ENCODE measurements at regions of chr17 and their contacts with region 1.

Region 1: GRCh38 chr17:35119368-35120165 is at the start of gene RAD51D:
- DNase-seq: peak; percentile 23 to 46
- ATAC-seq: peak; percentile 91 to 96
- H3K4me3 ChIP-seq: peak within 1 kb of the TSS; percentile 70 to 98 (median 75)
- H3K27ac ChIP-seq: peak within 1 kb of the TSS; percentile 64 to 79 (median 73)
- H3K4me1 ChIP-seq: peaks cover 6 to 7% of the 10 kb centered on the region in 2 donors
- H3K27me3 ChIP-seq: no peaks in the 10 kb centered on the region
- CTCF ChIP-seq: peak; percentile 85 to 99 (median 96)
- POLR2A ChIP-seq: no peak
- total RNA-seq, gene RAD51D: 2.5 to 5.2 (median 2.8) TPM

Region 2: DNA sequence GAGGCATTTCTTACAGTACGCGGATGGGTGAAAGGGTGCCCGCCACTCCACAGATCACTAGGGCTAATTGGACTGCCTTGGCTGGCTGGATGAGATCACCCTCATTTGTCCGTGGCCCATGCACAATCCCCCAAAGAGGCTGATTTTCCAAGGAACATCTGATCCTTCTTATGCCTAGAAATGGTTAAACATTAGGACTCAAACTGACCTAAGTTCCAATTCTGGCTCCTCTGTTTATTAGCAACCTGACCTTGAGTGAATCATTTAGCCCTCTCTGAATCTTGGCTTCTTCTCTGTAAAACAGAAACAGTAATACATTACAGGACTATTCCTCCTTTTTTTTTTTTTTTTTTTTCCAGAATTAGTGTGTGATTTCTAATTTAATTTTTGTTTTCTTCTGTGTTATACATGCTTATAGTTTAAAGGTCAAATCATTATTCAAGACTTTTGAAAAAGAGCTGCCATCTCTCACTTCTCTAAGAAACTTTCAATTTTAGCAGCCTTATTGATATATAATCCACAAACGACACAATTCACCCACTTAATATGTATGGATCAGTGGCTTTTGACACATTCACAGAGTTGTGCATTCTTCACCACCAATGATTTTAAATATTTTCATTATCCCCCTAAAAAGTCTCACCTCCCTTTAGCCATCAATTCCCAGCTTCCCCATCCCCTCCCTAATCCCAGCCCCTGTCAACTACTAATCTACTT is 585.6 kb before region 1 on chr17:
- in situ Hi-C with region 1: loop called in 3 of 4 experiments (anchors 10 to 25 kb)
- intact Hi-C with region 1: no loop called
- DNase-seq: no peak
- ATAC-seq: no peak
- H3K4me3 ChIP-seq: no peak overlapping the region
- H3K27ac ChIP-seq: no peak overlapping the region
- H3K4me1 ChIP-seq: no peaks in the 10 kb centered on the region
- H3K27me3 ChIP-seq: no peaks in the 10 kb centered on the region
- CTCF ChIP-seq: no peak
- POLR2A ChIP-seq: no peak

Region 3: GRCh38 chr17:34840750-34841149 is 278.8 kb before region 1 on chr17:
- in situ Hi-C with region 1: loop called in 1 of 4 experiments (anchors 25 kb)
- intact Hi-C with region 1: no loop called
- DNase-seq: no peak
- ATAC-seq: no peak
- H3K4me3 ChIP-seq: no peak overlapping the region
- H3K27ac ChIP-seq: no peak overlapping the region
- H3K4me1 ChIP-seq: no peaks in the 10 kb centered on the region
- H3K27me3 ChIP-seq: no peaks in the 10 kb centered on the region
- CTCF ChIP-seq: no peak
- POLR2A ChIP-seq: no peak

Region 4: GRCh38 chr17:34998205-34998604 is 121.4 kb before region 1 on chr17:
- in situ Hi-C with region 1: no loop called
- intact Hi-C with region 1: loop called (anchors 1 kb)
- DNase-seq: peak; percentile 38 to 64
- ATAC-seq: peak; percentile 65 to 89
- H3K4me3 ChIP-seq: no peak overlapping the region
- H3K27ac ChIP-seq: peak overlapping the region in 1 of 4 donors; percentile 34
- H3K4me1 ChIP-seq: peaks cover 6 to 9% of the 10 kb centered on the region in 2 donors
- H3K27me3 ChIP-seq: no peaks in the 10 kb centered on the region
- CTCF ChIP-seq: peak; percentile 59 to 83 (median 72)
- POLR2A ChIP-seq: no peak

Region 5: GRCh38 chr17:35141681-35142466 is 22.3 kb after region 1 on chr17 and contains the start of gene NLE1:
- in situ Hi-C with region 1: no loop called
- intact Hi-C with region 1: no loop called
- DNase-seq: peak; percentile 68
- ATAC-seq: peak; percentile 77 to 84
- H3K4me3 ChIP-seq: peak within 1 kb of the TSS; percentile 76 to 99 (median 88)
- H3K27ac ChIP-seq: peak within 1 kb of the TSS; percentile 12 to 49 (median 40)
- H3K4me1 ChIP-seq: peaks cover 15 to 23% of the 10 kb centered on the region in 2 donors
- H3K27me3 ChIP-seq: no peaks in the 10 kb centered on the region
- CTCF ChIP-seq: peak; percentile 82 to 97 (median 87)
- POLR2A ChIP-seq: no peak
- total RNA-seq, gene NLE1: 9.9 to 19.3 (median 11.5) TPM